Caco-2 (cell line): ENCODE measurements at regions of chr6 and their contacts with region 1.

Region 1: DNA sequence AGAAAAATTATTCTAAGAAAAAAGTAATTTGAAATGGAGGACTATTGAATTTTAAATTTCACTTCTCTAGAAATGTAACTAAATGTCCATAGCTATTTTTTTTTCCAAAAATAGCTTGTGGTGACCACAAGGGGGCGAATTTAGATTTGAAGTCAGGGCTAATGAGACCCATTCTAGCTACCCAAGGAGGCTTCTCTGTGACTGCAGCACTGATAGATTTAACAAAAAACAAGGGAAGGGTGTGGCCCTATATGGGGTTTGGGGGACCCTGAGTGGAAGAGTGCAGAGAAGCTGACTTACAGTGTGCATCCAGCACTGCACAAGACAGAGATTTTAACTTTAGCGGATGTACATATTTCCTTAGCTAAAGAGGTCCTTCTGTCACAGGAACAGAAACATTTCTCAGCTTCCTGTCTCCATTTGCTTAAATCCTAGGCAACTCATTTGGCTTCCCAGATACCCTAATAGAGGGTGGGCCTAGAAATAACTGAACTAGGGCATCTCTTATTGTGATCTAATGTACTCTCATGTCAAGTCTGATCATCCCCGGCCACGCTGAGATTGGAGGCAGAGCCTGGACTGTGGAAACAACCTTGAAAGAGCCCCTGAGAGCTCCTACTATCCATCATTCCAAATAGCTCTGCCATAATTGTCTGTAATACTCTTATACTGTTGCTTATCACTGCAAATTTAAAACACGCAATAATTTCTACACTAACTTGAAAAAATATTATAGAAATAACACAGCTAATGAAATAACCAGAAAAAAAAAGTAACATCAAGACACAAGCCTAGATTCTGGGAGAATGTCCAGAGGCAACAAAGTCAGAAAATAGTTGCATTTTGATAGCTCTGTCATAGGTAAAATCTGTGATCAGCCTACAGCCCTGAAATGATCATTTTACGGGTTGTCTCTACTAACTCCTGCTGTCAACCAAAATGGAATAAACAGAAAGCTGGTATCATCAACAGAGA is 93.6 kb downstream of the SNAP91 start:
- DNase-seq: peak in 1 of 2 experiments; percentile 37
- H3K4me3 ChIP-seq: no peak overlapping the region
- H3K4me3 Mint-ChIP-seq: no peak overlapping the region
- H3K27ac Mint-ChIP-seq: no peak overlapping the region
- H3K4me1 ChIP-seq: no peaks in the 10 kb centered on the region
- H3K4me1 Mint-ChIP-seq: no peaks in the 10 kb centered on the region
- H3K27me3 ChIP-seq: no peaks in the 10 kb centered on the region
- H3K27me3 Mint-ChIP-seq: peaks cover 9% of the 10 kb centered on the region
- CTCF ChIP-seq: peak; percentile 64 to 73

Region 2: DNA sequence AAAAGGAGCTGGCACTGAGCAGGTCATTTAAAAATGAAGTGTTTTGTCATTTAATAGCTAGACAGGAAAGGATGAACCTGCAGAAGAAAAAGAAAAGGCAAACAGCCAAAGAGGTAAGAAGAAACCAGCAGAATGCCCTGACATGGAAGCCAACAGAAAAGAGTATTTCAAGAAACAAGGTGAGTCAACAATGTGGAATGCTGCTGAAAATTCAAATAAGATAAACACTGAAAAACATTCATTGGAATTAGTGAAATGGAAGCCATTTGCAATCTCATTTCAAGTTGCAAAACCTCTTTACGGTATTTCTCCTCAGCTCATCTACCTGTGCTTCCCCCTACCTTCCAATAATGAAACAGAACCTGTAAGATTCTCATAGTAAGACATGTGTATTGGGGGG is 362.6 kb before region 1 on chr6:
- CTCF ChIA-PET with region 1: no interaction called
- POLR2A ChIA-PET with region 1: no interaction called
- intact Hi-C with region 1: no loop called
- DNase-seq: no peak
- H3K4me3 ChIP-seq: no peak overlapping the region
- H3K4me3 Mint-ChIP-seq: no peak overlapping the region
- H3K27ac Mint-ChIP-seq: peak overlapping the region; percentile 42
- H3K4me1 ChIP-seq: peaks cover 6% of the 10 kb centered on the region; the same call in 1 of the 2 replicates
- H3K4me1 Mint-ChIP-seq: peaks cover 25% of the 10 kb centered on the region
- H3K27me3 ChIP-seq: no peaks in the 10 kb centered on the region
- H3K27me3 Mint-ChIP-seq: no peaks in the 10 kb centered on the region
- CTCF ChIP-seq: no peak

Region 3: DNA sequence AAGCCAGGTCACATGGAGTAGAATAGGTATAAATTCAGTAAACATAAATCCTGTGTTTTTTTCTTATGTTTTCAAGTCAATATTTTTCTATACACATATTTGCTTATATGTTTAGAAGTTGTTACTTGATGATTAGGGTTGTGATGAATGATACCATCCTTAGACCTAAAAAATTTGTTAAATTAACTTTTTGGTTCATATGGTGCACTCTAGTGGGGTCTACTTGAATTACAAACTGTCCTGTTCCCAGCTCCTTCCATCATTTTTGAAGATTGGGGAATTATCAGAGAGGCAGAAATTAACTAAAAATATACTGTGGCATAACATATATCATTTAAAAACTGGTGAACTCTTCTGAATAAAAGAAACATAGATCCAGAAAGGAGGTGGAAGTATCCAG is 189.6 kb after region 1 on chr6:
- CTCF ChIA-PET with region 1: interaction called, 23 read pairs
- POLR2A ChIA-PET with region 1: no interaction called
- intact Hi-C with region 1: loop called (anchors 1 kb)
- DNase-seq: no peak
- H3K4me3 ChIP-seq: no peak overlapping the region
- H3K4me3 Mint-ChIP-seq: no peak overlapping the region
- H3K27ac Mint-ChIP-seq: no peak overlapping the region
- H3K4me1 ChIP-seq: no peaks in the 10 kb centered on the region
- H3K4me1 Mint-ChIP-seq: no peaks in the 10 kb centered on the region
- H3K27me3 ChIP-seq: no peaks in the 10 kb centered on the region
- H3K27me3 Mint-ChIP-seq: no peaks in the 10 kb centered on the region
- CTCF ChIP-seq: peak in 1 of 2 experiments; percentile 13

Region 4: DNA sequence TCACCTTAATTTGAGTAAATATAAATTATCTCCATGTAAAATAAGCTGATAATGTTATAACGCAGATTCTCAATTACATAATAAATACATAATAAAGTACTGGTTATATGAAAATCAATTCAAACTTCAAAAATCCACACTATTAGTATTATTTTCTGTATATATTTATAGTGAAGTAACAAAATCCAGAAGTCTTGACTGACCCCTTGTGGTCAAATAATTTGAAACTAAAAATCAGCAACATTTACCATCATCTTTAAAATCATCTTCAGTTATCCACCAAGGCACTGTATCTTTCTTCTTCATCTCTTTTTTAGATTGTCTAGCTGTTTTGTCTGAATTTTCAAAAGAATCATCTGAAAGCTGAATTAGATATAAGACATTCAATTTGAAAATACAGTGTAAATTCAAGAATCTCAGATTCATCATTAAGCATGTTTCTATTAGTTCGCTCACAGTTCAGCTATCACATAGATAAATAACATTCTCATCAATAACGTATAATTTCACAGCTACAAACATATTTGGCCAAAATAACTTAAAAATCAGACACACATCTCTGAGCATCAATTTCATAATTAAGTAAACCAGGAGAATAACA is 605.6 kb after region 1 on chr6:
- CTCF ChIA-PET with region 1: no interaction called
- POLR2A ChIA-PET with region 1: no interaction called
- intact Hi-C with region 1: loop called (anchors 2 kb)
- DNase-seq: no peak
- H3K4me3 ChIP-seq: no peak overlapping the region
- H3K4me3 Mint-ChIP-seq: no peak overlapping the region
- H3K27ac Mint-ChIP-seq: no peak overlapping the region
- H3K4me1 ChIP-seq: no peaks in the 10 kb centered on the region
- H3K4me1 Mint-ChIP-seq: no peaks in the 10 kb centered on the region
- H3K27me3 ChIP-seq: no peaks in the 10 kb centered on the region
- H3K27me3 Mint-ChIP-seq: no peaks in the 10 kb centered on the region
- CTCF ChIP-seq: peak; percentile 35 to 56